ENCODE measurements at regions of chr1 and their contacts with region 1.

Region 1: DNA sequence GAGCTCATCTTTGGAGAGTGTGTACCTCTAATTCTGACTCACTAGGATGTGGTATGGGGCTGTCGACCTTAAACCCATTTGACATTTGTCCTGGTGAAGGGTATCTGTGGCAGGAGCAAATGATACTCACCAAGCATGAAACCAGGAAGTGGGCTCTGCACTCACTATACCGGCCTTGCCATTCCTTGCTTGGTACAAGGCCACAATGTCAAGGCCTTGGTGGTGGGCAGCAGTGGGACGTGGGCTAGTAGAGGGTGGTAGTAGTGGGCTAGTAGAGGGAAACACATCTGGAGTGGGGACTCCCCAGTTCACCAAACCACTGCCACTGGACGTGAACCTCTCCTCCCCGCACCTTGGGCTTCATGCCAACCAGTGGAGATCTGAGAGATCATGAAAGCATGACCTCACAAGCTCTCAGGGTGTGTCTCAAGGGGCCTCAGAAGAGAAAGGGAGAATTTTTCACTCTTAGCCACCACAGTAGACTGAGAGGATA is 11.5 kb downstream of the TNFSF4 start:
- DNase-seq: peak; percentile 31
- ATAC-seq: peak; percentile 93
- H3K4me3 Mint-ChIP-seq: peak overlapping the region; percentile 61
- H3K27ac Mint-ChIP-seq: peak overlapping the region; percentile 88
- H3K4me1 Mint-ChIP-seq: peaks cover 36% of the 10 kb centered on the region
- H3K27me3 Mint-ChIP-seq: no peaks in the 10 kb centered on the region
- CTCF ChIP-seq: no peak

Region 2: GRCh38 chr1:173112129-173112528 is 83.5 kb before region 1 on chr1:
- CTCF ChIA-PET with region 1: no interaction called
- POLR2A ChIA-PET with region 1: no interaction called
- intact Hi-C with region 1: loop called (anchors 5 kb)
- DNase-seq: no peak
- ATAC-seq: peak; percentile 90
- H3K4me3 Mint-ChIP-seq: peak overlapping the region; percentile 8
- H3K27ac Mint-ChIP-seq: peak overlapping the region; percentile 46
- H3K4me1 Mint-ChIP-seq: peaks cover 39% of the 10 kb centered on the region
- H3K27me3 Mint-ChIP-seq: no peaks in the 10 kb centered on the region
- CTCF ChIP-seq: no peak

Measured in activated B cell treated with CpG ODN at 0.5 μM for 24 hours (primary cell).